Colonic mucosa (tissue), 4 donors: ENCODE measurements at regions of chr10 and their contacts with region 1.

Region 1: DNA sequence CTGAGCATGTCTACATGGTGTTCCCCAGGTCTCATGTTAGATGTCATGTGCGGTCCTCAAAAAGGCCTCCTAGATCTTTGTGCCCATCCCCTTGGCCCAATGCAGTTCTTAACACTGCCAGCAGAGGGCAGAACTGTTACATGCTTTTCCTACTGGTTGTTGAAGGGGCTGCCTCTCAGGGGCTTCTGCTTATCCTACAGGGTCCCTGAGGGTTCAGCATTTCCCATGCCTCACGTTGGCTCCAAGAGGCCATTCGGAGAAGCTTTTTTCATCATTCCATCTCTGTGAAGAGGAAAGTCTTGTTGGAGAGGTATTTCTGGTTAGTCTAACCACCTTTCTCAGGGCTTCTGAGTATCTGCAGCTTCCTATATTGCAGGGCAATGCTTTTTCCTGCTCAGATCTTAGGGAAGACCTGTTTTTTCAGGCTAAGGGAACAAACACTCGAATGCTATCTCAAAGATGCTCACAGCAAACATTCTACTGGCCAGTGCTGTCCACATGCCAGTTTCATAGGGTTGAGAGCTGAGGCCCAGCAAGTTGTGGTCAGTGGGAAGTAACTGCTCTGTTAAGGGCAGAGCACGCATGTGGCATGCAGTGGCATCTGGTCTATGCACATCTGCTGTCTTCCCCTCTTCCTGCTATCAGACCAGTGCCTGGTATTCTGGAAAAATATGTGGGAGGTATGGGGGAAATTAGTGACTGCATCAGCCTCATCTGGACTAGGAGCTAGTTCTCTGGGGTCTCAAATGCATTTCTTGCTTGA is 31.5 kb downstream of the MBL2 start:
- DNase-seq: peak; percentile 48
- H3K4me3 ChIP-seq: no peak overlapping the region
- H3K27ac ChIP-seq: no peak overlapping the region
- H3K4me1 ChIP-seq: no peaks in the 10 kb centered on the region
- H3K27me3 ChIP-seq: no peaks in the 10 kb centered on the region
- CTCF ChIP-seq: peak; percentile 80

Region 2: GRCh38 chr10:52682784-52683183 is 58.3 kb before region 1 on chr10:
- intact Hi-C with region 1: no loop called
- DNase-seq: peak; percentile 31
- H3K4me3 ChIP-seq: no peak overlapping the region
- H3K27ac ChIP-seq: no peak overlapping the region
- H3K4me1 ChIP-seq: no peaks in the 10 kb centered on the region
- H3K27me3 ChIP-seq: no peaks in the 10 kb centered on the region
- CTCF ChIP-seq: no peak

Region 3: DNA sequence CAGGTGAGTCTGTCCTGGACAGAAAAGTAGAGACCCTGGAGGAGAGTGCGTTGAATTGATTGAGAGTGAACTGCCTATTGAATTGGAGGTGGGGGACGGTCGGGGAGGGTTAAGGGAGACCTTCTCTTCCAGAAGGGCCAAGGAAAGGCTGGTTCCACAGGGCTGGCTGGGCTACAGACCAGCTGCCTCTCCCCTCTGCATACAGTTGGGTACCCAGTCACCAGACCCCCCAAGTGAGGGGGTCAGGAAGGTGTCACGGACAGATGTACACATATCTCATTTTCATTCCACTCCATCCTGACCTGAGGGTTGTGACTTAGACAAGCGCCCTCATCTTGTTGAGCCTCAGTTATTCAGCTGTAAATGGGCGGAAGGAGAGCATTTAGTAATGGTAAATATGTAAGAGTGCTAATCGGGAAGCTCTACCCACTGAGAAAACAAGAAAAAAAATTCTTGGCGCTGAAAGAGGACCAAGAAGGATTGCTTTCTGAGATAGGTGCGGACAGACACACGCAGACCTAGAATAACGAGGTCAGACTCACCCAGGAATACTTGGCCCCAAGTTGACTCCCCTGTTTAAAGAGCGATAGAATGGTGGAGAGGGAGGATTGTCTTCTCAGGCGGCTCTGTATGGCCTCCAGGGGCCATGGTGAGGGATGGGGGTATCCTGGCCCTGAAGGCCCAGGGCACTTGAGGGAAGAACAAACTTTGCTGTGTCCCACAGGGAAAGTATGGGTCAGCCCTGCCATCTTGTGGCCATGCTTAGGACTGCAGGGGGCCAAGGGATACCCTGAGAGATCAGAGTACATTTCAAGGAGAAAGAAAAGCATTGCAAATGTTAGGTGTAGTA is 38.7 kb after region 1 on chr10:
- intact Hi-C with region 1: loop called (anchors 5 kb)
- DNase-seq: peak; percentile 71
- H3K4me3 ChIP-seq: no peak overlapping the region
- H3K27ac ChIP-seq: no peak overlapping the region
- H3K4me1 ChIP-seq: no peaks in the 10 kb centered on the region
- H3K27me3 ChIP-seq: no peaks in the 10 kb centered on the region
- CTCF ChIP-seq: peak; percentile 82

Region 4: DNA sequence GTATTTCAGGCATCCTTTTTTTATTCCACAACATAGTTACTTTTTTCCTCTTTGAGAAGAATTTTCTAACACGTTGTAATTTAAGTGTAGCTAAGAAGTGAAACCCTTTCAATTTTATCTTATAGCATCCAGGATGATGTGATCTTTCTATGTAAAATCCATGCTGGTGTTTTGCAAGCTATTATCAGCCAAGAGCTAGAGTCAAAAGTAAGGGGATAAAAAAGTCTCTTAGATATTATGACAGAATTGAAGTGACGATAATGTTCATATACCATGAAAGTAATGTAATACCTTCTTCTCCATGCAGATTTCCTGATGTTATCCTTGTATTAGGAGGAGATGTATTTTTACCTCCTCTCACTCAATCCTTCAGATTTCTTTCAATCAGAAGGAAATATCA is 95.7 kb after region 1 on chr10:
- intact Hi-C with region 1: no loop called
- DNase-seq: no peak
- H3K4me3 ChIP-seq: no peak overlapping the region
- H3K27ac ChIP-seq: no peak overlapping the region
- H3K4me1 ChIP-seq: no peaks in the 10 kb centered on the region
- H3K27me3 ChIP-seq: no peaks in the 10 kb centered on the region
- CTCF ChIP-seq: no peak

Region 5: DNA sequence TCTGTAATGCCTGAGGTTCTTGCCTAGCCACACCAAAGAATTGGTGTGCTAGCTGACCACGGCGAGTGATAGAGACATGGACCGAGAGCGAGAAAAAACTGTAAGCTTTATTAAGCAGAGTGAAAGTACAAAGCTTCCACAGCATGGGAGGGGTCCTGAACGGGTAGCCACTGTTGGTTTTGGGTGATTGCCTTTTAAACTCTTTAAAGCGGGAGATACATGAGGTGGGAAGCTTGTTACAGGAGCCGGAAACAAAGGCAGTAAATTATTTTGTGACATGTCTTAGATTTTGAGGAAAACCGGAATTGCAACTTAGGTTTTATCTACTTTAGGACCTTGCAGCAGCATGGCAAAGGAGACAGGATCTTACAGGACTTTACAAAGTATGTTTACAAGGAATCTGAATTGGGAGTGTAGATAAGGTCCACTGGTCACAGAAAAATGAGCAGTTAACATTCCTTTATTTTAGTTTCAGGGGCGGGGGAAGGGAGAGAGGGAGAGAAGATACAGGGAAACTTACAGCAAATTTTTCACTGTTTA is 284.1 kb after region 1 on chr10:
- intact Hi-C with region 1: no loop called
- DNase-seq: no peak
- H3K4me3 ChIP-seq: no peak overlapping the region
- H3K27ac ChIP-seq: no peak overlapping the region
- H3K4me1 ChIP-seq: no peaks in the 10 kb centered on the region
- H3K27me3 ChIP-seq: no peaks in the 10 kb centered on the region
- CTCF ChIP-seq: no peak